ENCODE measurements at regions of chrX and their contacts with region 1.

Region 1: DNA sequence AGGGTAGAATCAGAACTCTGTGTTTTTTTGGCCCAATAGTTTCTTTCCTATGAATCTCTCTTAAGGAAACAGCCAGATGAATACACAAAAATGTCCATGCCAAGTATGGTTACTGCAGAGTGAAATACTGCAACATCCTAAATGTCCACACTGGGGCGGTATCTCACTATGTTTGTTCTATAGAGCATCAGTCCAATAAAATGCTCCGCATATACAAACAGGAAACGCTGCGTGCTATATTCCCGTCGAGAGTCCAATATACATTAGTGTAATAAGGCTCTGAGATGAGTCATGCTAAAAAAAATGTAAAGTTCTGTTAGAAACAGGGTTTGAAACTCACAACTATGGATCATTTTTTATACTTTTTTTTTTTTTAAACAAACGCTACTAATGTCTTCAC is 72.9 kb upstream of the ENOX2 start:
- DNase-seq: no peak
- CTCF ChIP-seq: peak; percentile 30

Region 2: DNA sequence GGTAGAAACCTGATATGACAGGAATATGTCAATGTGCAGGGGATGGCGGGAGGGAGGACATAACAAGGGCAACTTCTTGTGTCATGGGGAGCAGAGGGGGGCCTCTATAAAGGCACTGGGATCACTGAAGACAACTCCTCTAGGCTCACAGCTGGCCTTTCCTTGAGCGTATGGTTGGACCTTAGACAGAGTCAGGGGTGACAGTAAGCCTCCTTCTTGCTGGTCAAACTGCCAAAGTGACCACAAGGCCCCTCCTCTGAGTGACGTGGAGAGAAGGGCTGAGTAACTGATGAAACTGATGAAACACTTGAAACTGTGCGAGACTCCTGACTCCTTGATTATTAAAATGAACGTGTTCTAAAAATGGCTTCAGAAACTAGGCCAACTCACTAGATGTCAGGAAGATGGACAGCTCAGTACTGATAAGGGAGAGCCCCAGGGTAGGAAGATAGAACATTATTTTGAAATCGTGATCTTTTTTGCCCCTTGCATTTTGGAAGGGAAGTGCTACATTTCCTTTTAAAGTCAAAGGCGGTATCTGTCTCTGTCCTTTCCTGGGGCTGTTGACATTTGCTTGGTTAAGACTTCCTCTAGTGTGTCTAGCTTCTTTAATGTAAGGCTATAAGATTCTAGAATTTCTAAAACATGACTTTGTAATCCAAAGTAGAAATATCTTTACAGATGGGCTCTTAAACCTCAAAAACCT is 802.6 kb before region 1 on chrX:
- in situ Hi-C with region 1: no loop called
- DNase-seq: peak; percentile 69
- CTCF ChIP-seq: no peak

Region 3: DNA sequence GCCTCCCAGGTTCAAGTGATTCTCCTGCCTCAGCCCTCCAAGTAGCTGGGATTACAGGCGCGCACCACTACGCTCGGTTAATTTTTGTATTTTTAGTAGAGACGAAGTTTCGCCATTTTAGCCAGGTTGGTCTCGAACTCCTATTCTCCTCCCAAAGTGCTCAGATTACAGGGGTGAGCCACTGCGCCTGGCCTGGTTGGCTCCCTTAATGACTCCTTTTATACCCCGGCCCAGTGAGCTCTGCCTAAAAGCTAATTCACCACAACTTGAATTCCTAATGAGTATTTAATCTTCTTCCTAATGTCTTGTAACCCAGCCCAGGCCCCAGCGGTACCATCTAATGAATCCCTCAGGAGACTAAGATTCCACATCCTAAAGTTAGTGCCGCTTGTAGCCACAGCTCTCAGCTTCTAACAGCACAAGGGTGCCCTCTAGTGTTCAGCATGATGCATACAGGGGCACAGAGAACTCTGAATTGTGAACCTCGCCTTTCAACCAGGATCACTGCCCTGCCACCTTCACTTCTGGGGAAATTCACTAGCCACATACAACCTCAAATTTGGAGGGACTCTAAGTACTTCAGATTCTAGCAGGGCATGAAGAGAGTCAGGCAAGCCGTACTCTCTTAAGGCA is 657.5 kb after region 1 on chrX:
- in situ Hi-C with region 1: loop called (anchors 25 kb)
- DNase-seq: peak; percentile 39
- CTCF ChIP-seq: peak; percentile 91